ENCODE measurements at regions of chr2 and their contacts with region 1.

Region 1: GRCh38 chr2:81412681-81413080 is 1108.1 kb upstream of the LRRTM1 start:
- DNase-seq: no peak
- H3K4me3 ChIP-seq: no peak overlapping the region
- H3K27ac ChIP-seq: no peak overlapping the region
- H3K4me1 ChIP-seq: no peaks in the 10 kb centered on the region
- H3K27me3 ChIP-seq: no peaks in the 10 kb centered on the region
- CTCF ChIP-seq: no peak
- EP300 ChIP-seq: no peak
- POLR2A ChIP-seq: no peak

Region 2: GRCh38 chr2:81481242-81481993 is 68.7 kb after region 1 on chr2:
- in situ Hi-C with region 1: no loop called
- intact Hi-C with region 1: loop called (anchors 2 kb)
- DNase-seq: no peak
- H3K4me3 ChIP-seq: no peak overlapping the region
- H3K27ac ChIP-seq: no peak overlapping the region
- H3K4me1 ChIP-seq: no peaks in the 10 kb centered on the region
- H3K27me3 ChIP-seq: no peaks in the 10 kb centered on the region
- CTCF ChIP-seq: no peak
- EP300 ChIP-seq: no peak
- POLR2A ChIP-seq: no peak